ENCODE measurements at regions of chr1 and their contacts with region 1.

Region 1: DNA sequence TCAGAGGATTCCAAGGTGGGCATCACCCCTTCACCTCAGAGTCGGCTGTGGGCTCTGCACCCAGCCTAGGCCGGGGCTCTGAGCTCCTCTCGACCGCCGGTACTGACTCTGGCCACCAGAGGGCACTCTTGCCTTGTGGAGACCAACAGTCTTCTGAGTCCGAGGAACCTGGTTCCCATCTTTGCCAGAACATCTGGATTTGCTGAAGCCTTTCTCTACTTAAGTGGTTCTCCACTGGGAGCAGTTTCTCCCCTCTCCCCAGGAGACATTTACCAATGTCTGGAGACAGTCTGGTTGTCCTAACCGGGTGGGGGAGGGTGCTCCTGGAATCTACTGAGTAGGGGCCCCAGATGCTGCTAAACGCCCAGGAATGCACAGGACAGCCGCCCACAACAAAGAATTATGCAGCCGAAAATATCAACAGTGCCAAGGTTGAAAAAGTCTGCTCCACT is 9.4 kb downstream of the ETV3L start:
- DNase-seq: no peak
- ATAC-seq: peak; percentile 98
- H3K4me3 ChIP-seq: no peak overlapping the region
- H3K27ac ChIP-seq: no peak overlapping the region
- H3K4me1 ChIP-seq: no peaks in the 10 kb centered on the region
- H3K27me3 ChIP-seq: no peaks in the 10 kb centered on the region; a peak in 1 of 4 replicates
- CTCF ChIP-seq: peak; percentile 93 to 96 (median 95)
- EP300 ChIP-seq: no peak
- POLR2A ChIP-seq: no peak
- RAD21 ChIP-seq: peak; percentile 97

Region 2: GRCh38 chr1:157105988-157106812 is 16.0 kb after region 1 on chr1:
- CTCF ChIA-PET with region 1: interaction called, 21 read pairs
- POLR2A ChIA-PET with region 1: interaction called, 4 read pairs
- RAD21 ChIA-PET with region 1: interaction called, 14 read pairs
- SMC1A ChIA-PET with region 1: interaction called, 9 read pairs
- in situ Hi-C with region 1: no loop called
- intact Hi-C with region 1: no loop called
- DNase-seq: peak; percentile 41
- ATAC-seq: peak; percentile 97
- H3K4me3 ChIP-seq: no peak overlapping the region
- H3K27ac ChIP-seq: peak overlapping the region; percentile 55
- H3K4me1 ChIP-seq: peaks cover 18% of the 10 kb centered on the region
- H3K27me3 ChIP-seq: no peaks in the 10 kb centered on the region; a peak in 1 of 4 replicates
- CTCF ChIP-seq: no peak
- EP300 ChIP-seq: peak; percentile 22 to 91; a peak in 2 of 4 replicates
- POLR2A ChIP-seq: 0 out of 2 replicates have a peak, but pooled peaks have one; percentile 21
- RAD21 ChIP-seq: no peak

Region 3: GRCh38 chr1:157117527-157118057 is 27.4 kb after region 1 on chr1:
- CTCF ChIA-PET with region 1: interaction called, 11 read pairs
- POLR2A ChIA-PET with region 1: no interaction called
- RAD21 ChIA-PET with region 1: interaction called, 3 read pairs
- SMC1A ChIA-PET with region 1: no interaction called
- in situ Hi-C with region 1: no loop called
- intact Hi-C with region 1: no loop called
- DNase-seq: no peak
- ATAC-seq: peak; percentile 85
- H3K4me3 ChIP-seq: no peak overlapping the region
- H3K27ac ChIP-seq: no peak overlapping the region
- H3K4me1 ChIP-seq: peaks cover 15% of the 10 kb centered on the region
- H3K27me3 ChIP-seq: no peaks in the 10 kb centered on the region
- CTCF ChIP-seq: no peak
- EP300 ChIP-seq: 0 out of 4 replicates have a peak, but pooled peaks of 1 of the 2 experiments have one; percentile 14
- POLR2A ChIP-seq: no peak
- RAD21 ChIP-seq: no peak

Region 4: GRCh38 chr1:157124855-157125254 is 34.6 kb after region 1 on chr1:
- CTCF ChIA-PET with region 1: interaction called, 20 read pairs
- POLR2A ChIA-PET with region 1: no interaction called
- RAD21 ChIA-PET with region 1: no interaction called
- SMC1A ChIA-PET with region 1: no interaction called
- in situ Hi-C with region 1: no loop called
- intact Hi-C with region 1: no loop called
- DNase-seq: no peak
- ATAC-seq: peak; percentile 69
- H3K4me3 ChIP-seq: no peak overlapping the region
- H3K27ac ChIP-seq: no peak overlapping the region
- H3K4me1 ChIP-seq: no peaks in the 10 kb centered on the region
- H3K27me3 ChIP-seq: no peaks in the 10 kb centered on the region
- CTCF ChIP-seq: peak in 2 of 3 experiments; percentile 13 to 19; a peak in 1 of 6 replicates
- EP300 ChIP-seq: no peak
- POLR2A ChIP-seq: no peak
- RAD21 ChIP-seq: no peak

Region 5: DNA sequence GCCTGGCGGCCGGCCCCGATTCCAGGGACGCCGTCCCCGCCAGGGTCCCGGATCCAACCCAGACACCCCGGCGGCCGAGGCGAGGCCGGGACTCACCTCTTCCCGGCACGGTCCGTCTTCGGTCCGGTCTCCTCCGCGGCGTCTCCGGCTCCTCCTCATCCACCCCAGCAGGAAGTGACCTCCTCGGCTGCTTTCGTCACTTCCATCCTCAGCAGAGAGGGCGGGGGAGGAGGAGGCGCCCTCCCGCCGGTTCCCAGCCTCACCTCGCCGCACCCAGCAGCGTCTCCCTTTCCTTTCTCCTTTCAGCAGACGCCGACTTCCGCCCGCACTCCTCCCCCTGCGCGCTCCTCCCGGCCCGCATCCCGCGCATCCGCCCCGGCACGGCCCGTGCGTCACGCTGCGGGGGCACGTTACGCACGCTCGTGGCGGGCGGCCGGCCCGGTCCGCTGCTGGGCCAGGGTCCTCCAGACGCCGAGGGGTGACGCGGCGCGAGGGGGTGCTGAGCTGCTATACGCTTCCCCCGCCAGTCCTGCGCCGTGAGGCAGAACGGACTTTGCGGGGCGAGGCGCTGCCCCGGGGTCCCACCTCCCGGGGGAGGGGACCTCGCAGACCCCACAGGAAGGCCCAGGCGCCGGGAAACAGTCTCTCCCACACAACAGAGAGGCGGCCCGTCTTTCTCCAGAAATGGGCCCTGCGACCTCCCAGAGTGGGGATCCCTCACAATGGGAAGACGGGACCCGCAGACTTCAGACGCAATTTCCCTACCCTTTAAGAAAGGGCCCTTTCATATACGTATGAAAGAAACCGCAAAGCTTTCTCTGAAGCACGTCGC is 48.2 kb after region 1 on chr1 and contains the start of gene ETV3:
- CTCF ChIA-PET with region 1: interaction called, 60 read pairs
- POLR2A ChIA-PET with region 1: interaction called, 3 read pairs
- RAD21 ChIA-PET with region 1: interaction called, 34 read pairs
- SMC1A ChIA-PET with region 1: interaction called, 27 read pairs
- in situ Hi-C with region 1: no loop called
- intact Hi-C with region 1: loop called (anchors 5 kb)
- DNase-seq: peak; percentile 42
- ATAC-seq: peak; percentile 90
- H3K4me3 ChIP-seq: peak within 1 kb of the TSS; percentile 96
- H3K27ac ChIP-seq: peak within 1 kb of the TSS; percentile 66
- H3K4me1 ChIP-seq: peaks cover 13% of the 10 kb centered on the region; the same call in 1 of the 2 replicates
- H3K27me3 ChIP-seq: no peaks in the 10 kb centered on the region
- CTCF ChIP-seq: no peak
- EP300 ChIP-seq: no peak
- POLR2A ChIP-seq: peak; percentile 93
- RAD21 ChIP-seq: no peak
- polyA plus RNA-seq, gene ETV3: 1.7 to 2.9 TPM

Region 6: GRCh38 chr1:157156058-157156541 is 65.9 kb after region 1 on chr1:
- CTCF ChIA-PET with region 1: interaction called, 715 read pairs
- POLR2A ChIA-PET with region 1: interaction called, 5 read pairs
- RAD21 ChIA-PET with region 1: interaction called, 442 read pairs
- SMC1A ChIA-PET with region 1: interaction called, 383 read pairs
- in situ Hi-C with region 1: loop called (anchors 5 kb)
- intact Hi-C with region 1: loop called (anchors 1 kb)
- DNase-seq: no peak
- ATAC-seq: peak; percentile 92
- H3K4me3 ChIP-seq: no peak overlapping the region
- H3K27ac ChIP-seq: no peak overlapping the region
- H3K4me1 ChIP-seq: peaks cover 9% of the 10 kb centered on the region
- H3K27me3 ChIP-seq: peaks cover 0 to 2% of the 10 kb centered on the region in 2 experiments; a peak in 2 of 4 replicates
- CTCF ChIP-seq: peak; percentile 80 to 95 (median 92)
- EP300 ChIP-seq: no peak
- POLR2A ChIP-seq: no peak
- RAD21 ChIP-seq: peak; percentile 86

Region 7: DNA sequence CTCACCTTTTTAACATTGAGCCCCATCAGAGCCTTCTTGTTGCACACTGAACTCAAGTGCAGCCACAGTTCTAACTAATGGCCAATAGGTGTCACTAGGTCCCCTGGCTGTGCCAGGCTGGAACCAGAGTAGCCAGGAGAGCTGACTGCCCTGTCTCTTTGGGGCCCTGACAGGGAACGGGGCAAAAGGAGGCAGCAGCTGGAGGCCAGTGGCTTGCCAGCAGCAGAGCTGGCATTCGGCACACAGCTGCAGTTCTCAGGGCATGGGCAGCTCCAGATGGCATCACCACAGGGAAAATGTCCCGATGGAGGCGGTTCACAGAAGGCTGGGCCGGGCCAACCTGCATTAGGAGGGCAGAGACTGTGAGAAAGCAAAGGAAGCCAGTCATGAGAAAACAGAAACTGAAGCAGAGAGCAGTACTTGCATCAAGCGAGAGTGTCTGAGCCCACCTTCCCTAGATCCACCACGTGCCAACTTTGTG is 273.5 kb after region 1 on chr1:
- CTCF ChIA-PET with region 1: no interaction called
- POLR2A ChIA-PET with region 1: no interaction called
- RAD21 ChIA-PET with region 1: no interaction called
- SMC1A ChIA-PET with region 1: no interaction called
- in situ Hi-C with region 1: no loop called
- intact Hi-C with region 1: no loop called
- DNase-seq: peak; percentile 20
- ATAC-seq: peak; percentile 98
- H3K4me3 ChIP-seq: no peak overlapping the region
- H3K27ac ChIP-seq: no peak overlapping the region; the same call in 1 of the 2 replicates
- H3K4me1 ChIP-seq: peaks cover 11% of the 10 kb centered on the region
- H3K27me3 ChIP-seq: no peaks in the 10 kb centered on the region
- CTCF ChIP-seq: peak; percentile 57 to 72 (median 70)
- EP300 ChIP-seq: no peak
- POLR2A ChIP-seq: no peak
- RAD21 ChIP-seq: peak; percentile 49; the same call in 1 of the 2 replicates

Region 8: GRCh38 chr1:157490467-157491165 is 400.4 kb after region 1 on chr1:
- CTCF ChIA-PET with region 1: no interaction called
- POLR2A ChIA-PET with region 1: no interaction called
- RAD21 ChIA-PET with region 1: interaction called, 5 read pairs
- SMC1A ChIA-PET with region 1: interaction called, 3 read pairs
- in situ Hi-C with region 1: loop called (anchors 10 kb)
- intact Hi-C with region 1: no loop called
- DNase-seq: no peak
- ATAC-seq: peak; percentile 77
- H3K4me3 ChIP-seq: no peak overlapping the region
- H3K27ac ChIP-seq: no peak overlapping the region
- H3K4me1 ChIP-seq: no peaks in the 10 kb centered on the region
- H3K27me3 ChIP-seq: 0 out of 4 replicates have a peak, but pooled peaks cover 0 to 2% of the 10 kb centered on the region in 2 experiments
- CTCF ChIP-seq: peak; percentile 67 to 73 (median 70)
- EP300 ChIP-seq: no peak
- POLR2A ChIP-seq: no peak
- RAD21 ChIP-seq: peak; percentile 67